Calu3 (cell line): ENCODE measurements at regions of chr1 and their contacts with region 1.

Region 1: GRCh38 chr1:50873458-50874187 is 86.4 kb downstream of the FAF1 start:
- DNase-seq: peak; percentile 80
- H3K4me3 Mint-ChIP-seq: peak overlapping the region; percentile 50
- H3K27ac Mint-ChIP-seq: peak overlapping the region; percentile 49
- H3K4me1 Mint-ChIP-seq: peaks cover 17% of the 10 kb centered on the region
- H3K27me3 Mint-ChIP-seq: no peaks in the 10 kb centered on the region
- CTCF ChIP-seq: peak; percentile 87

Region 2: GRCh38 chr1:50704126-50704525 is 169.5 kb before region 1 on chr1:
- CTCF ChIA-PET with region 1: no interaction called
- intact Hi-C with region 1: no loop called
- DNase-seq: peak; percentile 43
- H3K4me3 Mint-ChIP-seq: no peak overlapping the region
- H3K27ac Mint-ChIP-seq: no peak overlapping the region
- H3K4me1 Mint-ChIP-seq: no peaks in the 10 kb centered on the region
- H3K27me3 Mint-ChIP-seq: no peaks in the 10 kb centered on the region
- CTCF ChIP-seq: peak; percentile 78

Region 3: DNA sequence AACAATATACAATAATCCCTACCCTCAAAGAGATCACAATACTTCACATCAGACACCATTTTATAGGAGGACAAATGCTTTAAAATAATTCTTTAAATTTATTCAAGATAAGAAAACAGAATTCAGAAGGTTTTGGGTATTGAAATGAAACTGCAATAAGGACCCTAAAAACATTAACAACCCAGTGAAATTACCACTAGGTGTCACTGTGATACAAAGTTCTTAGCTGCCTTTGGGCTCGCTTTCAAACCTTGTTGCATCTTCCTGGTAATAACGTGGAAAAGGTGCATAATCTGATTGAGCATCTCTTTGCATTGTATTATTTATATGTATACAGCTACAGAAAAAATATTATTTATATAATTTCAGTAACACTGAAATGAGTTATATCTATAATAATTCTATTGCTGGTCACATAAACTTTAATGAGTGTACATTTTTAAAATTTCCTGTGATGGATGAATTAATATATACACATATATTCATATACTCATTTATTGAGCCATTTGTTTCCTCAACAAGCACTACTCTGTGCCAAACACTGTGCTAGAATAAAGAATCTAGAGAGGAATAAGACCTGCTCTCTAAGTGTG is 98.8 kb before region 1 on chr1:
- CTCF ChIA-PET with region 1: interaction called, 15 read pairs
- intact Hi-C with region 1: no loop called
- DNase-seq: peak; percentile 12
- H3K4me3 Mint-ChIP-seq: no peak overlapping the region
- H3K27ac Mint-ChIP-seq: no peak overlapping the region
- H3K4me1 Mint-ChIP-seq: no peaks in the 10 kb centered on the region
- H3K27me3 Mint-ChIP-seq: no peaks in the 10 kb centered on the region
- CTCF ChIP-seq: no peak

Region 4: DNA sequence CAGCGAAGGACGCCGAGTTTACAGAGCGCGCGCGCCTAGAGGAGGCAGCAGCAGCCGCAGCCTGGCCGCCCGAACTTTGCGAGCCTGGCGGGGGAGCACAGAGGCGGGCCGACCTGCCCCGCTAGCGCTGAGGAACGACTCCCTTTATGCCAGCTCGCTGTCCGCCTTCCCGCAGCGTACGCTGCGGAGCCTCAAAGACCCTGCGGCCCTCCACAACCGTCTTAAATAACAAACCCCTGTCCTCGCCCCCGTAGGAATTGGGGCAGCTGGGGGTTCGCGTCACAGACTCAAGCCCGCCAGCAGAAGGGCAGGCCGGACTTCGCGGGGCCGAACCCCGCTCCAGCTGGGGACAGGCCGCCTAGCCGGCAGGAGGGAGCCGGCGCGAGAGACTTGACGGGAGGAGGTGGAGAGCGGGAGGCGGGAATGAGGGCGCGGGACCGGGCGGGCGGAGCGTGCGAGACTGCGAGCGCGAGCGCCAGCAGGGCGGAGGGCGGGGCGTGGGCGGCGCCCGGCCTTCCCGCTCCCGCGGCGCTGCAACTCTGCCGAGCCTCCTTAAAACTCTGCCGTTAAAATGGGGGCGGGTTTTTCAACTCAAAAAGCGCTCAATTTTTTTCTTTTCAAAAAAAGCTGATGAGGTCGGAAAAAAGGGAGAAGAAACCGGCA is 94.7 kb after region 1 on chr1:
- CTCF ChIA-PET with region 1: interaction called, 5 read pairs
- intact Hi-C with region 1: loop called (anchors 5 kb)
- DNase-seq: peak; percentile 95
- H3K4me3 Mint-ChIP-seq: peak overlapping the region; percentile 89
- H3K27ac Mint-ChIP-seq: peak overlapping the region; percentile 72
- H3K4me1 Mint-ChIP-seq: peaks cover 10% of the 10 kb centered on the region
- H3K27me3 Mint-ChIP-seq: no peaks in the 10 kb centered on the region
- CTCF ChIP-seq: no peak

Region 5: GRCh38 chr1:50978144-50978851 is 104.7 kb after region 1 on chr1:
- CTCF ChIA-PET with region 1: interaction called, 10 read pairs
- intact Hi-C with region 1: no loop called
- DNase-seq: peak; percentile 82
- H3K4me3 Mint-ChIP-seq: peak overlapping the region; percentile 78
- H3K27ac Mint-ChIP-seq: peak overlapping the region; percentile 96
- H3K4me1 Mint-ChIP-seq: peaks cover 24% of the 10 kb centered on the region
- H3K27me3 Mint-ChIP-seq: no peaks in the 10 kb centered on the region
- CTCF ChIP-seq: no peak

Region 6: GRCh38 chr1:51044834-51045233 is 171.2 kb after region 1 on chr1:
- CTCF ChIA-PET with region 1: interaction called, 3 read pairs
- intact Hi-C with region 1: loop called (anchors 5 kb)
- DNase-seq: no peak
- H3K4me3 Mint-ChIP-seq: no peak overlapping the region
- H3K27ac Mint-ChIP-seq: no peak overlapping the region
- H3K4me1 Mint-ChIP-seq: no peaks in the 10 kb centered on the region
- H3K27me3 Mint-ChIP-seq: no peaks in the 10 kb centered on the region
- CTCF ChIP-seq: no peak

Region 7: GRCh38 chr1:51058858-51059257 is 185.2 kb after region 1 on chr1:
- CTCF ChIA-PET with region 1: interaction called, 6 read pairs
- intact Hi-C with region 1: loop called (anchors 5 kb)
- DNase-seq: peak; percentile 19
- H3K4me3 Mint-ChIP-seq: no peak overlapping the region
- H3K27ac Mint-ChIP-seq: no peak overlapping the region
- H3K4me1 Mint-ChIP-seq: peaks cover 32% of the 10 kb centered on the region
- H3K27me3 Mint-ChIP-seq: no peaks in the 10 kb centered on the region
- CTCF ChIP-seq: peak; percentile 54

Region 8: GRCh38 chr1:51341876-51342496 is 468.4 kb after region 1 on chr1:
- CTCF ChIA-PET with region 1: no interaction called
- intact Hi-C with region 1: no loop called
- DNase-seq: no peak
- H3K4me3 Mint-ChIP-seq: no peak overlapping the region
- H3K27ac Mint-ChIP-seq: no peak overlapping the region
- H3K4me1 Mint-ChIP-seq: peaks cover 19% of the 10 kb centered on the region
- H3K27me3 Mint-ChIP-seq: no peaks in the 10 kb centered on the region
- CTCF ChIP-seq: no peak